ENCODE measurements at regions of chr12 and their contacts with region 1.

Region 1: GRCh38 chr12:105420659-105421240 is 90.3 kb downstream of the C12orf75 start:
- DNase-seq: peak; percentile 21
- H3K4me3 Mint-ChIP-seq: no peak overlapping the region
- H3K27ac Mint-ChIP-seq: no peak overlapping the region
- H3K4me1 Mint-ChIP-seq: peaks cover 7% of the 10 kb centered on the region
- H3K27me3 Mint-ChIP-seq: peaks cover 5% of the 10 kb centered on the region

Region 2: DNA sequence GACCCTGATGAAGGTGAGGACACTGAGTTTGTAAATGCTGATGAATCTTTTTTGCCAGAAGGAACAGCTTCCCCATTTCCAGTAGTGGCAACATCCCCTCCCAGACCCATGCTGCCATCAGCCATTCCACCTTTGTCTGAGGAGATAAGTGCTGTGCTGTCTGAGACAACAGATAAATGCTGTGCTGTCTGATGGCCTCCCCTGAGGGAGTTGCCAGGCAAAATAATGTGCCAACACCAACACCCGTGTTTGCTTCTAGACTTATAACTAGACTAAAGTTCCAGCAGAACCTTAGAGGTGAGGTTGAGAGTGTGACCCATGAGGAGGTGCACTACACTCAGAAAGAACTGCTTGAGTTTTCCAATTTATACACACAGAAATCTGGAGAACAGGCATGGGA is 259.2 kb after region 1 on chr12:
- intact Hi-C with region 1: loop called (anchors 10 kb)
- DNase-seq: no peak
- H3K4me3 Mint-ChIP-seq: no peak overlapping the region
- H3K27ac Mint-ChIP-seq: no peak overlapping the region
- H3K4me1 Mint-ChIP-seq: no peaks in the 10 kb centered on the region
- H3K27me3 Mint-ChIP-seq: peaks cover 2% of the 10 kb centered on the region

Region 3: DNA sequence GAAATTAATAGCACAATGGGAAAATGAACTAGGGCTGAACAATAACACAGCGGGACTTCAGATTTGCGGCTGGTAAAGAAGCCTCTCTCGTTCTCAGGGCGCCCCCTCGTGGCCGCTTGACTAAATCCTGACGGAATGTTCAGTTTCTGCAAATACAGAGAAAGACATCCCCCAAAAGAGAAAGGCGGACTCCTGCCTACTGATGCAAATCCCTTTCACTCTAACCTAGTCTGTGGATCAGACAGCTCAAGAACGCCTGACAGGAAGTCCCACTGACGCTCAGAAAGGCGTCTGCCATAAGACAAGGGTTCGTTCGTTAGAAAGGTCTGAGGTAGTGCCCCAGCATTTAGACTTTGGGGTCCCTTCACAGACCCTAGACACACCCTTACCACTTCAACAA is 715.5 kb after region 1 on chr12:
- intact Hi-C with region 1: loop called (anchors 1 kb)
- DNase-seq: peak; percentile 48
- H3K4me3 Mint-ChIP-seq: no peak overlapping the region
- H3K27ac Mint-ChIP-seq: no peak overlapping the region
- H3K4me1 Mint-ChIP-seq: no peaks in the 10 kb centered on the region
- H3K27me3 Mint-ChIP-seq: peaks cover 39% of the 10 kb centered on the region

Region 4: DNA sequence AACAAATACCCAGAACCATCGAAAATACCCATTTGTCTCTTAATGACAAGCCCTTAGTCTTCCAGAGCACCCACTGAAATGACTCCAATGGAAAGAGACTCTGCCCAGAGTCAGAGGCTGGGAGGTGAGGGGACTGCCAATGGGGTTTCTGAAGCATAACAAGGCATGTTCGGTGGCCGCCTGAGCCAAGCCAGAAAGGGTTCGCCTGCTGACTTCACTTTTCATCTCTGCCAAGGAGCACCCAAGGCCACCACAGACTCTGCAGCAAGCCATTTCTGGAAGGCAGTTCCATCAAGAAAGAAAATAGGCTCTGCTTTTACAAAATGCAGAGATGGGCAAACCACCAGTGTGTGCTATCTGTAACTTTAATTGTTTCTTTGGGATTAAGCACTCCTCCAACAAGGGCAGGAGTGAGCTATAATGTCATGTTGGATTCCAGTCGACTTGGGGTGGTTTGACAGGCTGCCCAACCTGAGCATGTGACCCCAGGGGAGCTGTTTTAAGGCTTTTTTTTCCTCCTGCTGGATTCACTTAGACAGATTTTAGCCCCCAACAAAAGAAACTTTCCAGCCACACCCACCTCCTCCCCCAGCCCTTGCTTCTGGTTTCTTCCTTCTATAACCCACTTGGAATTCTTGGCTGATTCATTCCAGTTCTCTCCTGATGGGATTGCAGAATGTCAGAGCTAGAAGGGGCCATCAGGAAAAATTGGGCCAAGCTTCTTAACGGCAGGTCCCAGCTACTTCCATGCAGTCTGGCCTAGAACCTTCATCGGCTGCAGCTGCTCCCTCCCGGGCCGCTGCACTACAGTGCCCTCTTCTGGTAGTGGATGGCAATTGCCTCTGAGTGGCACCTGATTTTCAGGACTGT is 803.0 kb after region 1 on chr12:
- intact Hi-C with region 1: loop called (anchors 1 kb)
- DNase-seq: peak; percentile 59
- H3K4me3 Mint-ChIP-seq: no peak overlapping the region
- H3K27ac Mint-ChIP-seq: no peak overlapping the region
- H3K4me1 Mint-ChIP-seq: peaks cover 29% of the 10 kb centered on the region
- H3K27me3 Mint-ChIP-seq: peaks cover 3% of the 10 kb centered on the region

Region 5: DNA sequence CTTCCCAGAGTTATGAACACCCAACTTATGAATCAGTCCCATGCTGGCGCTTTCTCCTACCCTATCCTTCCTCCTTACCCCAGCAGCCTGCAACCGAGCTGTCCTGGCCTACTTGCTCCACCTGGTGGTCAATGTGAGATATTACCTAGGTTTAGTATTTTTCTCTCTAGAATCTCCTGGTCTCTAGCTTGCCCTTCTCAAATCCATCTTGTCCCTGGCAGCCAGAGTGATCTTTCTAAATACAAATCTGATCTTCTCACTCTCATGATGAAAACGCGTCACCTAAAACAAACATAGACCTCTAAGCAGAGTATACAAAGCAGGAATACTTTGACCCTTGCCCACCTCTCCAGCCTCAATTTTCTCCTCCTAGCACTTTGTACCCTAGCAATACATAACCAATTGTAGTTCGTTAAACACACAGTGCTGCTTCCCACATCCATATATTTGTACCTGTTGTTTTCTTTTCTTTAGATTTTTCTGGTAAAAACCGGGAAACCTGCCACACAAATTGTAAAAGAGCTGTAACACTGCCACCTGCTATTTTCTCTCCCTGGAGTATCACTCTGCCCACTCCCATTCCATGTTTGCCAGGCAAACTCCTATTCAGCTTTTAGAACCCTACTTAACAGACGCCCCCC is 861.8 kb after region 1 on chr12:
- intact Hi-C with region 1: loop called (anchors 2 kb)
- DNase-seq: peak; percentile 19
- H3K4me3 Mint-ChIP-seq: no peak overlapping the region
- H3K27ac Mint-ChIP-seq: no peak overlapping the region
- H3K4me1 Mint-ChIP-seq: peaks cover 13% of the 10 kb centered on the region
- H3K27me3 Mint-ChIP-seq: peaks cover 6% of the 10 kb centered on the region